CD8-positive, alpha-beta T cell (primary cell): ENCODE measurements at regions of chr11 and their contacts with region 1.

Region 1: GRCh38 chr11:42234451-42234951 is 775.0 kb upstream of the LRRC4C start:
- DNase-seq: no peak
- ATAC-seq: no peak
- H3K4me3 ChIP-seq: no peak overlapping the region
- H3K4me3 Mint-ChIP-seq: no peak overlapping the region
- H3K27ac ChIP-seq: no peak overlapping the region
- H3K27ac Mint-ChIP-seq: no peak overlapping the region
- H3K4me1 ChIP-seq: no peaks in the 10 kb centered on the region
- H3K4me1 Mint-ChIP-seq: no peaks in the 10 kb centered on the region
- H3K27me3 ChIP-seq: no peaks in the 10 kb centered on the region
- H3K27me3 Mint-ChIP-seq: no peaks in the 10 kb centered on the region
- CTCF ChIP-seq: no peak

Region 2: GRCh38 chr11:42154655-42155054 is 79.8 kb before region 1 on chr11:
- CTCF ChIA-PET with region 1: no interaction called
- POLR2A ChIA-PET with region 1: no interaction called
- intact Hi-C with region 1: no loop called
- DNase-seq: no peak
- ATAC-seq: no peak
- H3K4me3 ChIP-seq: no peak overlapping the region
- H3K4me3 Mint-ChIP-seq: no peak overlapping the region
- H3K27ac ChIP-seq: no peak overlapping the region
- H3K27ac Mint-ChIP-seq: no peak overlapping the region
- H3K4me1 ChIP-seq: no peaks in the 10 kb centered on the region
- H3K4me1 Mint-ChIP-seq: no peaks in the 10 kb centered on the region
- H3K27me3 ChIP-seq: no peaks in the 10 kb centered on the region
- H3K27me3 Mint-ChIP-seq: no peaks in the 10 kb centered on the region
- CTCF ChIP-seq: no peak

Region 3: DNA sequence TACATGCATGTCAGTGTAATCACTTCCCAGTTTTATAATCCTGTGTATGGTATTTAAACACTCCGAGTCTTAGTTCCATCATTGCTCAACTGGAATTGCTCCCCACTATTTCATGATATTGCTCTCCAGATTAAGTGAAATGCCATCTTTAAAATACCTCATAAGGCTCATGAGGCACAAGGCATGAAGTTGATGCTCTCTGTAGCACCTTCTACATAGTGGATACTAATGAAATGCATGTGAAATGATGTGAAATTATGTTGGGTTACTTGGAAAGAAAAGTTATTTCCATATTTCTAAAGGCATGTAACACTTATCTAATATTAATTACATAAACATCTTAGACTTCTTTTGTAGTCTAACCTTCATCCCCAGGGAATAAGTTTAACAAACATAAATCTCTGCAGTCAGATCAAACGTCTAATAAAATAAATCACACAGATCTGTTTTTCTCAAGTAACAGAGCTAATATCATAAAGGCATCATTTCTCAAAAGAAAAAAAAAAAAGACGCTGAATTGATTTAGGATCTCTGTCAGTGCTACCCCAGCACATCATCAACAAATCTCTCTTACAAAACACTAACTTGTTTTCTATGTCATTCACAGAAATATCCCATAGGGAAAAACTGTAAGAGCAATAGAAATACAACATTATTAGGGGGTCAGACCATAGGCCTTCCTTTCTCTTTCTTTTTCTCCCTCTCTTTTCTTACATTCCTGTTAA is 39.0 kb before region 1 on chr11:
- CTCF ChIA-PET with region 1: no interaction called
- POLR2A ChIA-PET with region 1: no interaction called
- intact Hi-C with region 1: loop called in 1 of 2 experiments (anchors 5 kb)
- DNase-seq: no peak
- ATAC-seq: no peak
- H3K4me3 ChIP-seq: no peak overlapping the region
- H3K4me3 Mint-ChIP-seq: no peak overlapping the region
- H3K27ac ChIP-seq: no peak overlapping the region
- H3K27ac Mint-ChIP-seq: no peak overlapping the region
- H3K4me1 ChIP-seq: no peaks in the 10 kb centered on the region
- H3K4me1 Mint-ChIP-seq: no peaks in the 10 kb centered on the region
- H3K27me3 ChIP-seq: no peaks in the 10 kb centered on the region
- H3K27me3 Mint-ChIP-seq: no peaks in the 10 kb centered on the region
- CTCF ChIP-seq: no peak

Region 4: GRCh38 chr11:42273977-42274376 is 39.5 kb after region 1 on chr11:
- CTCF ChIA-PET with region 1: no interaction called
- POLR2A ChIA-PET with region 1: no interaction called
- intact Hi-C with region 1: no loop called
- DNase-seq: no peak
- ATAC-seq: no peak
- H3K4me3 ChIP-seq: no peak overlapping the region
- H3K4me3 Mint-ChIP-seq: no peak overlapping the region
- H3K27ac ChIP-seq: no peak overlapping the region
- H3K27ac Mint-ChIP-seq: no peak overlapping the region
- H3K4me1 ChIP-seq: no peaks in the 10 kb centered on the region
- H3K4me1 Mint-ChIP-seq: no peaks in the 10 kb centered on the region
- H3K27me3 ChIP-seq: no peaks in the 10 kb centered on the region
- H3K27me3 Mint-ChIP-seq: no peaks in the 10 kb centered on the region
- CTCF ChIP-seq: no peak